ENCODE measurements at regions of chr5 and their contacts with region 1.

Region 1: DNA sequence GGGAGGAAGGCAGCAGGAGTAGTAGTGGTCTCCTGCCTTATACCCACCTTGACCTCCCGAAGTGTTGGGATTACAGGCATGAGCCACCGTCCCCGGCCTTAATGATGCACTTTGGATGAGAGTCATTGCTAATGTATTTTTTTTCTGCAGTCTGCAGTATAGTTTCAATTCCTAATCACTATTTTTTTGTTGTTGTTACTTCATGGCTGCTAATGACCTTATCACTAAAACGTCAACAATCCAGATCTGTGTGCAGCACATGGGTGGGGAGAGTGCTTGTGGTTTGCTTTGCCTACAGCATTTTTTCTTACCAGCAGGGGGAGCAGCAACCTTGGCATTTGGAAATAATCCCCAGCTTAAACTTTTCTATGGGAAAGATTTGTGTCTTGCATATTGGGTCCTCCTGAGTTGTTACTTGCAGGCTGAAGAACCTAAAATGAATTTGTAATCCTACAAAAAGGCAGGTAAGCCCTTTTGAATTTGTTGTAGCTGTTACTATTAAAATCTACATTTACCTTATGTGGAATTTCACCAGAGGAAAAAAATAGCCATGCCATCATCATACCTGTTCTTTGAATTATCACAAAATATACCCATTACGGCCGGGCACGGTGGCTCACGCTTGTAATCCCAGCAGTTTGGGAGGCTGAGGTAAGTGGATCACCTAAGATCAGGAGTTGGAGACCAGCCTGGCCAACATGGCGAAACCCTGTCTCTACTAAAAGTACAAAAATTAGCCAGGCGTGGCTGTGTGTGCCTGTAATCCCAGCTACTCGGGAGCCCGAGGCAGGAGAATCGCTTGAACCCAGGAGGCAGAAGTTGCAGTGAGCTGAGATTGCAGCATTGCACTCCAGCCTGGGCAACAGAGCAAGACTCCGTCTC is 6.3 kb upstream of the MED7 start:
- DNase-seq: peak; percentile 95
- ATAC-seq: peak; percentile 95
- H3K4me3 ChIP-seq: no peak overlapping the region
- H3K27ac ChIP-seq: no peak overlapping the region
- H3K4me1 ChIP-seq: no peaks in the 10 kb centered on the region
- H3K27me3 ChIP-seq: peaks cover 11% of the 10 kb centered on the region; the same call in 1 of the 2 replicates
- CTCF ChIP-seq: peak; percentile 99

Region 2: DNA sequence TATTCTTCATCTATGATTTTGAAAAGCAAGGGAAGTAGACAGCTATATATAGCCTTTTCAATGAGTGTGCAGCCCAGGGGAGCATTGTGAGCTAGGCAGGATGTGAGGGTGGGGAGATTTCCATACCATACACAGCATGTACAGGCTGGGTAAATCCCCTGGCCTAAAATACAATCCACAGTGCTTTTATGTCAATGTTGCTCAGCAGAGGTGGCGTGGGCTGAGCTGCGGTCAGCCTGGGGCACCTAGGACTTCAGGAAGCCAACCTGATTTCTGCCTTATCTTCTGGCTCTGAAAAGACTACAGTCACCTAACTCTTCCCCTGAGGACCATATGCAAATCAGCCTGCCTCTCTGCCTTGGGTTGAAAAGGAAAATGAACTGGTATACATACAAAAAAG is 23.4 kb after region 1 on chr5:
- CTCF ChIA-PET with region 1: no interaction called
- POLR2A ChIA-PET with region 1: no interaction called
- intact Hi-C with region 1: no loop called
- DNase-seq: no peak
- ATAC-seq: no peak
- H3K4me3 ChIP-seq: no peak overlapping the region
- H3K27ac ChIP-seq: no peak overlapping the region
- H3K4me1 ChIP-seq: no peaks in the 10 kb centered on the region
- H3K27me3 ChIP-seq: peaks cover 55% of the 10 kb centered on the region
- CTCF ChIP-seq: no peak

Region 3: DNA sequence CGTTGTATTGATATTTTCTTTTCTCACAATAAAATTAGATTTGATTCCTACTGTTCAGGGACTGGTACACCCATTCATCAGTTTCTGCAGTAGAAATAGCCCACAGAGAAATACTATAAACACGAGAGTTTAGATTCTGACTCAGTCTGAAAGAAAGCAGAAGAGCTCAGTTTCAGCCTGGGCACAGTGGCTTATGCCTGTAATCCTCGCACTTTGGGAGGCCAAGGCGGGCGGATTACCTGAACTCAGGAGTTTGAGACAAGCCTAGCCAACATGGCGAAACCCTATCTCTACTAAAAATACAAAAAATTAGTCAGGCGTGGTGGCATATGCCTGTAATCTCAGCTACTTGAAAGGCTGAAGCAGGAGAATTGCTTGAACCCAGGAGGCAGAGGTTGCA is 40.2 kb after region 1 on chr5:
- CTCF ChIA-PET with region 1: no interaction called
- POLR2A ChIA-PET with region 1: no interaction called
- intact Hi-C with region 1: no loop called
- DNase-seq: no peak
- ATAC-seq: no peak
- H3K4me3 ChIP-seq: no peak overlapping the region
- H3K27ac ChIP-seq: no peak overlapping the region
- H3K4me1 ChIP-seq: no peaks in the 10 kb centered on the region
- H3K27me3 ChIP-seq: peaks cover 90% of the 10 kb centered on the region
- CTCF ChIP-seq: no peak

Region 4: DNA sequence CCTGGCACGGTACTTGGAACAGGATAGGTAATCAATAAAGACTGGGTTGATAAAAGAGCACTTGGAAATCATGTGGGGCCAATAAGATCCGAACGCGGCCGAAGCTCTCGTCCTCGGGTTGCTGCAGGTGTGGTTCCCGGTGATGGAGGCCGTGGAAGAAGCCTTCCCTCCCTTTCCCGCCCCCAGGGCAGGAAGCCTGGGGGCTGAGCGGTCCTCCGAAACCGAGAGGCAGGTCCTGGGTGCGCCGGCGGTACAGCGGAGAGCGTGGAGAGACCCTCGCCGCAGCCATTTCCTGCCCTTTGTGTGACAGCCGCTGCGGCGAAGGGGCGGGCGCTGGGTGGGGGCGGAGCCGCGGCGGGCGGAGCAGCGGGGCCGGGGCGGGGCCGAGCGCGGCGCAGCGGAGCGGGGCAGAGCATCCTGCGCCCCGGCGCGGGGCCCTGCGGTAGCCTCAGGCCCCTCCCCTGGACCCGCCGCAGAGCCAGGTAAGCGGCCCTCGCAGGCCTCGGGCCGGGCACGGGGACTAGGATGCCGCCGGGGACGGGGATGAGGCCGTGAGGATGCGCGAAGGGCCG is 116.8 kb after region 1 on chr5 and contains the start of gene CYFIP2:
- CTCF ChIA-PET with region 1: no interaction called
- POLR2A ChIA-PET with region 1: no interaction called
- intact Hi-C with region 1: loop called (anchors 5 kb)
- DNase-seq: peak; percentile 80
- ATAC-seq: peak; percentile 97
- H3K4me3 ChIP-seq: peak within 1 kb of the TSS; percentile 79
- H3K27ac ChIP-seq: no peak within 1 kb of the TSS
- H3K4me1 ChIP-seq: peaks cover 11% of the 10 kb centered on the region
- H3K27me3 ChIP-seq: peaks cover 15% of the 10 kb centered on the region
- CTCF ChIP-seq: no peak
- total RNA-seq, gene CYFIP2: 30.4 and 36.0 TPM in 2 replicates

Region 5: GRCh38 chr5:157312492-157312891 is 163.5 kb after region 1 on chr5:
- CTCF ChIA-PET with region 1: no interaction called
- POLR2A ChIA-PET with region 1: no interaction called
- intact Hi-C with region 1: loop called (anchors 1 kb)
- DNase-seq: peak; percentile 92
- ATAC-seq: peak; percentile 97
- H3K4me3 ChIP-seq: no peak overlapping the region
- H3K27ac ChIP-seq: no peak overlapping the region
- H3K4me1 ChIP-seq: no peaks in the 10 kb centered on the region
- H3K27me3 ChIP-seq: no peaks in the 10 kb centered on the region
- CTCF ChIP-seq: peak; percentile 98

Region 6: GRCh38 chr5:157485340-157485739 is 336.4 kb after region 1 on chr5:
- CTCF ChIA-PET with region 1: no interaction called
- POLR2A ChIA-PET with region 1: no interaction called
- intact Hi-C with region 1: no loop called
- DNase-seq: no peak
- ATAC-seq: no peak
- H3K4me3 ChIP-seq: no peak overlapping the region
- H3K27ac ChIP-seq: no peak overlapping the region
- H3K4me1 ChIP-seq: peaks cover 7% of the 10 kb centered on the region
- H3K27me3 ChIP-seq: no peaks in the 10 kb centered on the region
- CTCF ChIP-seq: no peak